H1 (cell line): ENCODE measurements at regions of chr7 and their contacts with region 1.

Region 1: GRCh38 chr7:100407285-100408180 is 21.0 kb downstream of the ZCWPW1 start:
- DNase-seq: peak in 1 of 2 experiments; percentile 51
- H3K4me3 ChIP-seq: no peak overlapping the region
- H3K27ac ChIP-seq: no peak overlapping the region
- H3K4me1 ChIP-seq: no peaks in the 10 kb centered on the region
- H3K27me3 ChIP-seq: no peaks in the 10 kb centered on the region; a peak in 1 of 7 replicates
- CTCF ChIP-seq: peak in 2 of 3 experiments; percentile 66 to 76; a peak in 3 of 4 replicates
- EP300 ChIP-seq: no peak
- POLR2A ChIP-seq: no peak
- RAD21 ChIP-seq: peak; percentile 74 to 78

Region 2: DNA sequence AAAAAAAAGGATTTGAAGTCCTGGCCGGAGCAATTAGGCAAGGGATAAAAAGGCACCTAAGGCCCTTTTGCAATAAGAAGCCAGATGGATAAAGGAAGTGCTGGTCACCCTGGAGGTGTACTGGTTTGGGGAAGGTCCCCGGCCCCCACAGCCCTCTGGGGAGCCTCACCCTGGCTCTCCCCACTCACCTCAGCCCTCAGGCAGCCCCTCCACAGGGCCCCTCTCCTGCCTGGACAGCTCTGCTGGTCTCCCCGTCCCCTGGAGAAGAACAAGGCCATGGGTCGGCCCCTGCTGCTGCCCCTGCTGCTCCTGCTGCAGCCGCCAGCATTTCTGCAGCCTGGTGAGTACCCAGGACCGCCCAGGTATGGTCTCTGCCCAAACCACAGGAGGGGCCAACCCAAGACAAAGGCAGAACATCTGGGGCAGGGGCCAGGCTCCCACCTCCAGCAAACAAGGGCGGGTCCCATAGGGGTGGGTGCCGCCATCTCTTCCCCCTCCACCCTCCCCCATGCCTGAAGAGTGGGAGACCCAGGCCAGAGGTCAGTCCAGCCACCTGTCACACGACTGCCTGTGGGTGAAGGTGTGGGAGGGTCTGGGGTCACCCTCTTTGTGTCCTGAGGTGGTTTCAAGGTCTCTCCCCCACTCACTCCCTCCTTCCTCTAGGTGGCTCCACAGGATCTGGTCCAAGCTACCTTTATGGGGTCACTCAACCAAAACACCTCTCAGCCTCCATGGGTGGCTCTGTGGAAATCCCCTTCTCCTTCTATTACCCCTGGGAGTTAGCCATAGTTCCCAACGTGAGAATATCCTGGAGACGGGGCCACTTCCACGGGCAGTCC is 49.3 kb before region 1 on chr7 and contains the start of gene PILRB:
- CTCF ChIA-PET with region 1: interaction called, 14 read pairs
- POLR2A ChIA-PET with region 1: interaction called, 3 read pairs
- DNase-seq: no peak
- H3K4me3 ChIP-seq: no peak within 1 kb of the TSS
- H3K27ac ChIP-seq: no peak within 1 kb of the TSS
- H3K4me1 ChIP-seq: no peaks in the 10 kb centered on the region
- H3K27me3 ChIP-seq: no peaks in the 10 kb centered on the region
- CTCF ChIP-seq: no peak
- EP300 ChIP-seq: no peak
- POLR2A ChIP-seq: no peak
- RAD21 ChIP-seq: peak; percentile 16 to 23; a peak in 2 of 4 replicates
- total RNA-seq, gene PILRB: 32.2 and 34.4 TPM in 2 replicates

Region 3: DNA sequence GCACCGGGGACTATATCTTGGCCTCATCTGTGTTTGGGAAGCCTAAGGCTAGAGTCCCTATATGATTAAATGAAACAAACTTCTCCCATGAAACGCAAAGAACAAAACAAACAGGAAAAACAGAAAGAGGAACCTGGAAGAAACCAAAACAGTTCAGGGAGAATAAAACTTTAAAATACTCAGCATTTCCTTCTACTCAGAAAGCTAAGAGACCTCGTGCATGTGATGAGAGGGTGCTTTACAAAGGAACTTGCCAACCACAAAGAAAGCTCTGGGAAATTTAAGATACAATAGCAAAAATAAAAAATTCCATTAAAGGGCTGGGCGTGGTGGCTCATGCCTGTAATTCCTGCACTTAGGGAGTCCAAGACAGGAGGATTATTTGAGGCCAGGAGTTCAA is 27.3 kb before region 1 on chr7:
- CTCF ChIA-PET with region 1: interaction called, 17 read pairs
- POLR2A ChIA-PET with region 1: interaction called, 3 read pairs
- DNase-seq: no peak
- H3K4me3 ChIP-seq: no peak overlapping the region
- H3K27ac ChIP-seq: no peak overlapping the region
- H3K4me1 ChIP-seq: no peaks in the 10 kb centered on the region
- H3K27me3 ChIP-seq: no peaks in the 10 kb centered on the region; a peak in 2 of 7 replicates
- CTCF ChIP-seq: no peak
- EP300 ChIP-seq: no peak
- POLR2A ChIP-seq: no peak
- RAD21 ChIP-seq: no peak

Region 4: GRCh38 chr7:100396421-100396982 is 11.0 kb before region 1 on chr7:
- CTCF ChIA-PET with region 1: interaction called, 41 read pairs
- POLR2A ChIA-PET with region 1: interaction called, 4 read pairs
- DNase-seq: no peak
- H3K4me3 ChIP-seq: no peak overlapping the region
- H3K27ac ChIP-seq: no peak overlapping the region
- H3K4me1 ChIP-seq: peaks cover 0 to 10% (median 5%) of the 10 kb centered on the region in 4 experiments; a peak in 6 of 7 replicates
- H3K27me3 ChIP-seq: peaks cover 0 to 2% (median 0%) of the 10 kb centered on the region in 4 experiments; a peak in 1 of 7 replicates
- CTCF ChIP-seq: no peak
- EP300 ChIP-seq: no peak
- POLR2A ChIP-seq: no peak
- RAD21 ChIP-seq: no peak

Region 5: GRCh38 chr7:100456558-100456957 is 49.0 kb after region 1 on chr7:
- CTCF ChIA-PET with region 1: interaction called, 34 read pairs
- POLR2A ChIA-PET with region 1: no interaction called
- DNase-seq: no peak
- H3K4me3 ChIP-seq: no peak overlapping the region
- H3K27ac ChIP-seq: no peak overlapping the region
- H3K4me1 ChIP-seq: peaks cover 0 to 8% (median 6%) of the 10 kb centered on the region in 4 experiments; a peak in 6 of 7 replicates
- H3K27me3 ChIP-seq: no peaks in the 10 kb centered on the region
- CTCF ChIP-seq: peak; percentile 32 to 41 (median 34); a peak in 3 of 4 replicates
- EP300 ChIP-seq: no peak
- POLR2A ChIP-seq: no peak
- RAD21 ChIP-seq: peak; percentile 31 to 43; a peak in 2 of 4 replicates